ENCODE measurements at regions of chr18 and their contacts with region 1.

Region 1: GRCh38 chr18:5890331-5891183 is 4.8 kb downstream of the TMEM200C start:
- DNase-seq: peak; percentile 25
- H3K4me3 Mint-ChIP-seq: no peak overlapping the region
- H3K27ac Mint-ChIP-seq: no peak overlapping the region
- H3K4me1 Mint-ChIP-seq: peaks cover 7% of the 10 kb centered on the region
- H3K27me3 Mint-ChIP-seq: peaks cover 52% of the 10 kb centered on the region

Region 2: GRCh38 chr18:5630057-5630899 is 260.3 kb before region 1 on chr18:
- CTCF ChIA-PET with region 1: no interaction called
- intact Hi-C with region 1: loop called (anchors 5 kb)
- DNase-seq: peak; percentile 56
- H3K4me3 Mint-ChIP-seq: peak overlapping the region; percentile 69
- H3K27ac Mint-ChIP-seq: no peak overlapping the region
- H3K4me1 Mint-ChIP-seq: no peaks in the 10 kb centered on the region
- H3K27me3 Mint-ChIP-seq: peaks cover 30% of the 10 kb centered on the region

Region 3: GRCh38 chr18:5868218-5869115 is 22.1 kb before region 1 on chr18:
- CTCF ChIA-PET with region 1: no interaction called
- intact Hi-C with region 1: no loop called
- DNase-seq: peak; percentile 70
- H3K4me3 Mint-ChIP-seq: no peak overlapping the region
- H3K27ac Mint-ChIP-seq: no peak overlapping the region
- H3K4me1 Mint-ChIP-seq: no peaks in the 10 kb centered on the region
- H3K27me3 Mint-ChIP-seq: peaks cover 7% of the 10 kb centered on the region

Region 4: DNA sequence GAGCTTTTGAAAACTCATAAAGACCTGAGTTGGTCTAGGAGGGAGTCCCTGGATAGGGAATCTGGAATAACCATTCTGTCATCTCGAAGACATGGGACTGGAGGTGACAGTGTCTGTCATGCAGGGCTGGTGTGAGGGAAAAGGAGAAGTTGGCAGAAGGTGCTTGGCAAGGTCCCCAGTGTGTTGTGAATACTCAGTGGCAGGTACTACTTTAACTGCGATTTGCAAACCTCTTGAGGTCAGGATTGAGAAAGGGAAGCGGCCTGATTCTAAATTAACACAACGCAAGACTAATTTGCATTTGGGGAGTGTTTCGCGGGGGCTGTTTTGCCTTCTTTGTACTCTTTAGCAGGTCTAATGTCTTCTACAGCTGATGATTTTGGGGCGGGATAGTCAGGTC is 81.7 kb after region 1 on chr18:
- CTCF ChIA-PET with region 1: no interaction called
- intact Hi-C with region 1: loop called (anchors 5 kb)
- DNase-seq: no peak
- H3K4me3 Mint-ChIP-seq: no peak overlapping the region
- H3K27ac Mint-ChIP-seq: no peak overlapping the region
- H3K4me1 Mint-ChIP-seq: peaks cover 11% of the 10 kb centered on the region
- H3K27me3 Mint-ChIP-seq: no peaks in the 10 kb centered on the region

Region 5: DNA sequence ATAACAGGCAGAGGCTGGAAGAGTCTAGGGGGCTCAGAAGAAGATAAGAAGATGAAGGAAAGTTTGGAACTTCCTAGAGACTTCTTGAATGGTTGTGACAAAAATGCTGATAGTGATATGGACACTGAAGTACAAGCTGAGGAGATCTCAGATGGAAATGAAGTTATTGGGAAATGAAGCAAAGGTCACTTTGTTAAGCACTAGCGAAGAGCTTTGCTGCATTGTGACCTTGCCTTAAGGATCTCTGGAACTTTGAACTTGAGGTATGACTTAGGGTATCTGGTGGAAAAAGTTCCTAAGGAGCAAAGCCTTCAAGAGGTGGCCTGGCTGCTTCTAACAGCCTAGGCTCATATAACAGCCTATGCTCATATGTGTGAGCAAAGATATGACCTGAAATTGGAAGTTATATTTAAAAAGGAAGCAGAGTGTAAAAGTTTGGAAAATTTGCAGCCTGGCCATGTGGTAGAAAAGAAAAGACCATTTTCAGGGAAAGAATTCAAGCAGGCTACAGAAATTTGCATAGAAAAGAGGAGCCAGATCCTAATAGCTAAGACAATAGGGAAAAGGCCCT is 432.8 kb after region 1 on chr18:
- CTCF ChIA-PET with region 1: no interaction called
- intact Hi-C with region 1: no loop called
- DNase-seq: no peak
- H3K4me3 Mint-ChIP-seq: no peak overlapping the region
- H3K27ac Mint-ChIP-seq: no peak overlapping the region
- H3K4me1 Mint-ChIP-seq: no peaks in the 10 kb centered on the region
- H3K27me3 Mint-ChIP-seq: no peaks in the 10 kb centered on the region

Measured in activated naive CD4-positive, alpha-beta T cell treated with anti-CD3 and anti-CD28 coated beads for 36 hours (primary cell).